ENCODE measurements at regions of chr14 and their contacts with region 1.

Region 1: GRCh38 chr14:73467377-73467776 is 9.0 kb upstream of the NUMB start:
- DNase-seq: no peak
- H3K4me3 Mint-ChIP-seq: peak overlapping the region; percentile 60
- H3K27ac Mint-ChIP-seq: peak overlapping the region; percentile 91
- H3K4me1 Mint-ChIP-seq: peaks cover 53% of the 10 kb centered on the region
- H3K27me3 Mint-ChIP-seq: peaks cover 2% of the 10 kb centered on the region

Region 2: DNA sequence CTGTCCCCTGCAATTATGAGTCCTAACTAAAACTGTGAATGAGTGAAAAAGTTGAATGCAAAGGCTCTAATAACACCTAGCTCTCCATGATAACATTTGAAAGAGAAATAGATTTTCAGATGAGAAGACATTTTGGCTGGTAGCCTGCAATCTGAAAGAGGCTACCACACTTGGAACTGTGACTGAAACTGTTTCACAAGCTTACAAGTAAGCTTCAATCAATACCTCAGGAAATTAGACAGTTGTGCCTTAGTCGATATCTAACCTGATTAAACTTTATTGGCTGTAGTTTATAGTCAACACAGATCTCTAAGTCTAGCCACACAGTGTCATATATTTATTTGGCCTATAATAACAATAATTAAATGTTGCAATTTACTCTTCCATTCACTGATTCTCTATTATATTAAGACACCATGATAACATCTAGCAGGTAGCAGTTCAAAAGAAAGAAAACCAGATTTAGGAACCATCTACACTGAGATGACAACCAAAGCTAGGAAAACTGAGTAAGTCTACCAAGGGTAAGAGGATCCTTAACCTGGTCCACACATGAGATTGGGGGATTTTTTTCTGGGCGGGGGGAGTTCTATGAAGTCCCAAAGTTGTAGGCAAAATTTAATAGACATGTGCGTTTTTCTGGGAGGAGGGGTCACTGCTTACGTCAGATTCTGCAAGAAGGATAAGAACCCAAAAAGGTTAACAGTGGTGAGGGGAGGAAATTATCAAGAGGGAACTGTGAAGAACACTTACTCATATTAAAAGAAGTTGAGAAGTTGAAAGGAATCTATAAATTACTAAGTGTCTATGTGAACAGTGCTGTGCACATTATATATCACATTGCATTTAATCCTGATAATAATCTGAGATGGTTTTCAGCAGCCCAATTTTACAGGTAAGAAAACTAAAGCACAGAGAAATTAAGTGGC is 74.8 kb before region 1 on chr14:
- intact Hi-C with region 1: loop called (anchors 5 kb)
- DNase-seq: no peak
- H3K4me3 Mint-ChIP-seq: no peak overlapping the region
- H3K27ac Mint-ChIP-seq: no peak overlapping the region
- H3K4me1 Mint-ChIP-seq: peaks cover 18% of the 10 kb centered on the region
- H3K27me3 Mint-ChIP-seq: no peaks in the 10 kb centered on the region